Activated B cell treated with CpG ODN at 0.5 μM for 24 hours (primary cell): ENCODE measurements at regions of chr10 and their contacts with region 1.

Region 1: DNA sequence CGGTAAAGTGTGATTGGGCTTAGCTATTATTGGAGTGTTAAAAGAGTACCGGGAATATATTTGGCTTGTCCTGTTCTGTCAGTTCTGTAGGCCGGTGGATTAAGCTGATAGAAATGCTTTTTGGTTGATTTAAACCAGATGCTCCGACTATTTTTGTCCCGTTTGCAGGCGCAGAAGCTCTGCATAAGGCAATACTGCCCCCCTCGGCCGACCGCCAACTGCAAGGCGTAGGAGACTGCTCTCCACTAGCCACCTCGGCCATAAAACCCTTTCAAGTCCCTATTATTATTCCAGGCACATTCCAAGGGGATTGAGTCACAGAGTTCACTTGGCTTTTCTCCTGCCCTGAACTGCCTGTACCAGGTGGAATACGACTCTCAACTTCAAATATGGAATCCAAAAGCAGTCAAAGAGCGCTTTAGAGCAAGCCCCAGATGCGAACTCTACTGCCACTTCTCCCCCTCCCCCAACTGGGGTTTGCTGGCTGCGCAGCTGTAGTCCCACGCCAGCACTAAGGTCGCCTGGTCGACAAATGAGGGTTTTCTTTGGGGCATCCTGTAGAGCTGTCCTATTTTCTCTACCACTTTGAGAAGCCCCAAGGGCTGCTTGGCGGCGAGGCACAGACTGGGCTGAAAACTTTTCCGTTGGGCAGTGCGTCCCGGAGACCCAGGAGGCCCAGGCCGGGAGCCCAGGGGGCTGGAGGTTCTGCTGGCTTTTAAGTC is 108.3 kb downstream of the REEP3 start:
- DNase-seq: peak; percentile 67
- ATAC-seq: peak; percentile 60
- H3K4me3 Mint-ChIP-seq: peak overlapping the region; percentile 91
- H3K27ac Mint-ChIP-seq: peak overlapping the region; percentile 94
- H3K4me1 Mint-ChIP-seq: peaks cover 28% of the 10 kb centered on the region
- H3K27me3 Mint-ChIP-seq: no peaks in the 10 kb centered on the region
- CTCF ChIP-seq: peak; percentile 38

Region 2: DNA sequence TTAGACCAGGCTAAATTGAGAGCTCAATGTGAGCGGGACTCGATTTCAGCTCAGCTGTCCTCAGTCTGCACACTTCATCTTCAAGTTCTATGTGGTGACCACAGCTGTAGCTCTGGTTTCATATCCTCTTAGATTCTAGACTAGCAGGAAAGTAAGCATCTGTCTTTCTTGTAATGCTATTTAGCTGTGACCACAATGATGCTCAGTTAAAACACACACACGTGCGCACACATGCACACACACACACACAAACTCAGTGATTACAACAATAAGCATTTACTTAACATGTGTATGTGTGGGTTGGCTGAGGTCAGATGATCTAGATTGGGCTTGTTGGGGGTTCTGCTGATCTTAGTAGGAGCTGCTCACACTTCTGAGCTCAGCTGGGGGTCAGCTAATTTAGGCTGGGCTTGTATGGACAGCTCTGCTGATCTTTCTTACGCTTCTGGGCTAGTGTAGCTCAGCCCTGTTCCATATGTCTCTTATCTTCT is 1172.9 kb before region 1 on chr10:
- CTCF ChIA-PET with region 1: no interaction called
- POLR2A ChIA-PET with region 1: no interaction called
- intact Hi-C with region 1: loop called (anchors 2 kb)
- DNase-seq: peak; percentile 22
- ATAC-seq: peak; percentile 93
- H3K4me3 Mint-ChIP-seq: peak overlapping the region; percentile 53
- H3K27ac Mint-ChIP-seq: peak overlapping the region; percentile 74
- H3K4me1 Mint-ChIP-seq: peaks cover 39% of the 10 kb centered on the region
- H3K27me3 Mint-ChIP-seq: no peaks in the 10 kb centered on the region
- CTCF ChIP-seq: no peak

Region 3: DNA sequence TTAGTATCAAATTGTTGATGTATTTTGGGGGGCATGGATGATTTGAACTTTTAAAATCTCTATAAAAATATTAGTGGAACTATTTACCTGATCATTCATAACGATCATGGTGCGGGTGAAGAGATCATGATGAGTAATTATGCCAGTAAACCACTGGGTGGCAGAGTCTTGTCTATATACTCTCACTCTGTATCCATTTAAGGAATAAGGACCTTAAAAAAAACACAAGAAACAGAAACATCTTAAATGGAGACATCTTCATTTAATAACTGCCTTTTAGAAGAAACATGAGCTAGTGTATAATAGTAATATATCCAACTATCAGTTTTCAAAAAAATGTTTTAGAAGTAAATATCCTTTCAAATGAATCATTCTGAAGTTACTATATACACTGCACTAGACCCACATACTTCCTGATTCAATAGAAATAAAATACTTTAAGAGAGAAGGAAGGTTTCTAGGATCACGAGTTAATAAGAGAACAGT is 412.4 kb before region 1 on chr10:
- CTCF ChIA-PET with region 1: interaction called, 66 read pairs
- POLR2A ChIA-PET with region 1: interaction called, 3 read pairs
- intact Hi-C with region 1: loop called (anchors 1 kb)
- DNase-seq: no peak
- ATAC-seq: peak; percentile 89
- H3K4me3 Mint-ChIP-seq: no peak overlapping the region
- H3K27ac Mint-ChIP-seq: peak overlapping the region; percentile 41
- H3K4me1 Mint-ChIP-seq: peaks cover 60% of the 10 kb centered on the region
- H3K27me3 Mint-ChIP-seq: no peaks in the 10 kb centered on the region
- CTCF ChIP-seq: no peak

Region 4: GRCh38 chr10:63355682-63356081 is 273.8 kb before region 1 on chr10:
- CTCF ChIA-PET with region 1: no interaction called
- POLR2A ChIA-PET with region 1: interaction called, 4 read pairs
- intact Hi-C with region 1: loop called (anchors 5 kb)
- DNase-seq: no peak
- ATAC-seq: no peak
- H3K4me3 Mint-ChIP-seq: no peak overlapping the region
- H3K27ac Mint-ChIP-seq: peak overlapping the region; percentile 32
- H3K4me1 Mint-ChIP-seq: peaks cover 22% of the 10 kb centered on the region
- H3K27me3 Mint-ChIP-seq: no peaks in the 10 kb centered on the region
- CTCF ChIP-seq: no peak

Region 5: GRCh38 chr10:63521416-63522276 is 107.9 kb before region 1 on chr10:
- CTCF ChIA-PET with region 1: interaction called, 11 read pairs
- POLR2A ChIA-PET with region 1: interaction called, 15 read pairs
- intact Hi-C with region 1: loop called (anchors 1 kb)
- DNase-seq: peak; percentile 72
- ATAC-seq: peak; percentile 70
- H3K4me3 Mint-ChIP-seq: peak overlapping the region; percentile 86
- H3K27ac Mint-ChIP-seq: peak overlapping the region; percentile 72
- H3K4me1 Mint-ChIP-seq: peaks cover 47% of the 10 kb centered on the region
- H3K27me3 Mint-ChIP-seq: no peaks in the 10 kb centered on the region
- CTCF ChIP-seq: no peak

Region 6: DNA sequence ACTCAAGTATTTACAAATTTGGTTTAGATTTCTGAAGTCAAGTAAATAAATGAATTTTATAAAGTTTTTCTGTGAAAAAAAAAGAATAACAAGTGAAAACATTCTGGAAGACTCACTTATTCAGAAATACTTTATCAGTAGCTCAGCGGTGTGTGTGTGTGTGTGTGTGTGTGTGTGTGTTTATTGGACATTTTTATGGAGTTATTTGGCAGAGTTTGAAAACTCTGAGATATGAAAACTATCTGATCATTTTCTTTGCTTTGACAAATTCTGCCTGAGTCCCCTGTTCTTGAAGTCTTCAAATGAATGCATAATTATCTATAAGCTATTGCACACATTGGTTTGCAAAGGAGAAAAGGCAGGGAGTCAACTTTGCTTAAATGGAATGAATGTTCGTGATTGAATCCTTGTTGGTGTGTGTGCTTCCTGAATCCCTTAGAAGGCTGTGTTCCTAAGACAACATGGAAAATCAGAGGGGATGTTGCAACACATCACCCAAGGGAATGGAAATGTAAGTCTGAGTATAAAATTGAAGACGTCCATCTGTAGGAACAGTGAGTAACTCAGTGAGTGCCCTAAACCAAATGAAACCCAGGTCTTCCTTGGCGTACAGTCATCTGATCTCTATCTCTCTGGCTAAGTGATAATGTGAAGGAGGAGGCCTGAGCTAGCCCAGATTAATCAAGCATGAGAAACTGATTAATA is 52.6 kb after region 1 on chr10:
- CTCF ChIA-PET with region 1: no interaction called
- POLR2A ChIA-PET with region 1: no interaction called
- intact Hi-C with region 1: no loop called
- DNase-seq: no peak
- ATAC-seq: no peak
- H3K4me3 Mint-ChIP-seq: no peak overlapping the region
- H3K27ac Mint-ChIP-seq: no peak overlapping the region
- H3K4me1 Mint-ChIP-seq: peaks cover under 1% of the 10 kb centered on the region
- H3K27me3 Mint-ChIP-seq: no peaks in the 10 kb centered on the region
- CTCF ChIP-seq: no peak

Region 7: DNA sequence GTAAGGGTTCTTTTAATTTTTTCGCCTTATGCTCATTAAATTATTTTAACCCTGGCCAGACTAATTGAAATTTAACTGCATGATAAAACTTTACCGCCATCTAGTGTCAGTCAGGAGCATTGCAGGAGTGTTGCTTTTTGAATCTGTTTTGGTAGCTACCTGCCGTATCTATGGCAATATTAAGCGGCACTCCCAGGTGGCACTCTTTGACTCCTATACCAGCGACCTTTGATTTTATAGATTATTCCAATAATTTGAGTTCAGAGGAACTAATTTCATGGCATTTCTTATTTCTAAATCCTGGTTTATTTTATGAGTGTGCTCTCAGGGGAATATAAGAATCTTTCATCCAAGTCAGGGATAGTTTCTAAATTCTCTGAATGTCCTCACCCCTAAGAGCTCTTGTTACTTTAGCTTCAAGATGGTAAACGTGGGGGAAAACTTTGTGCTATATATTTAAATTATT is 90.6 kb after region 1 on chr10:
- CTCF ChIA-PET with region 1: interaction called, 51 read pairs
- POLR2A ChIA-PET with region 1: interaction called, 8 read pairs
- intact Hi-C with region 1: loop called (anchors 1 kb)
- DNase-seq: no peak
- ATAC-seq: peak; percentile 94
- H3K4me3 Mint-ChIP-seq: no peak overlapping the region
- H3K27ac Mint-ChIP-seq: no peak overlapping the region
- H3K4me1 Mint-ChIP-seq: peaks cover 12% of the 10 kb centered on the region
- H3K27me3 Mint-ChIP-seq: peaks cover 12% of the 10 kb centered on the region
- CTCF ChIP-seq: peak; percentile 100